CD14-positive monocyte (primary cell): ENCODE measurements at regions of chr9 and their contacts with region 1.

Region 1: DNA sequence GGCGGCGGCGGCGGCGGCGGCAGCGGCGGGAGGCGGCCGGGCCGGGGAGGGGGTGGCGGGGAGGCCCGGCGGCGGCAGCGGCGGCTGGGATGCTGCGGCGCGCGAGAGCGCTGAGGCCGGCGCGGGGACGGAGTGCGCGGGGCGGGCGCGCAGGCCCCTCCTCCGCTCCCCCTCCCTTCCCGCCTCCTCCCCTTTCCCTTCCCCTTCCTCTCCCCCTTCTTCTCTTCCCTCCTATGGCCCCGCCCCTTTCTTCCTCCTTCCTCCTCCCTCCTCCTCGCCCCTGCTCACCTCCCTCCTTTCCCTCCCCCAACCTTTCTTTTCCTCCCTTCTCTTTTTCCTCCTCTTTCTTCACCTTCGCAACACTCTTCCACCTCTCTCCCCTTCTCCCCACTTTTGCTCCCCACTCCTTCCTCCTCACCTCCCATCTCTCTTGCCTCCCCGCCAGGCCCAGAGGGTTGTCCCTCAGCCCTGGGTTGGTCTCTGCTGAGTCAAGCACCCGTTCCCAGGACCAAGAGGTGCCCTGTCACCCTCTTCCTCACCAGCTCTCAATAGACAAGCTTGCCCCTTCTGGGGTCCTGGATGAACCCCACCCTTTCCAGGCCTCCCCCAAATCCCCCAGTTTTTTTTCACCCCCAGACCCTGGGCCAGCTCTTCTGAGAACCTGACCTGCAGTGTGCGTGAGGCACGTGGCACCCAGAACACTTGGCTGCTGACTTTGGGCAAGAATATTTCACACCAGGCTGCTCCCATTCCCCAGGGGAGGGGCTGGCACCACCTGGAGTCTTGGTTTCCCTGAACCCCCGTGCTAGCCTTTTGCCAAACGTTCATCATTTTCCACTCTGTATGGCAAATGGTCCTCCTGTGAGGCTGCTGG is at the start of gene SEMA4D:
- DNase-seq: peak; percentile 61 to 79 (median 74)
- H3K4me3 ChIP-seq: peak within 1 kb of the TSS; percentile 82 to 91 (median 82)
- H3K4me3 Mint-ChIP-seq: peak within 1 kb of the TSS; percentile 94 to 97
- H3K27ac ChIP-seq: peak within 1 kb of the TSS; percentile 79 to 82
- H3K27ac Mint-ChIP-seq: peak within 1 kb of the TSS; percentile 75 to 97 (median 90)
- H3K4me1 ChIP-seq: peaks cover 58% of the 10 kb centered on the region in 2 donors
- H3K4me1 Mint-ChIP-seq: peaks cover 67% of the 10 kb centered on the region
- H3K27me3 ChIP-seq: no peaks in the 10 kb centered on the region
- H3K27me3 Mint-ChIP-seq: peaks cover 0 to 4% (median 1%) of the 10 kb centered on the region in 3 donors
- CTCF ChIP-seq: no peak
- polyA plus RNA-seq, gene SEMA4D: 28.2 to 117 (median 28.6) TPM

Region 2: GRCh38 chr9:89462817-89463683 is 35.2 kb before region 1 on chr9:
- intact Hi-C with region 1: loop called in 1 of 2 experiments (anchors 2 kb)
- DNase-seq: no peak
- H3K4me3 ChIP-seq: peak overlapping the region in 1 of 3 experiments; percentile 14
- H3K4me3 Mint-ChIP-seq: peak overlapping the region in 1 of 2 donors; percentile 23
- H3K27ac ChIP-seq: peak overlapping the region in 1 of 2 donors; percentile 80
- H3K27ac Mint-ChIP-seq: peak overlapping the region; percentile 86 to 95 (median 91)
- H3K4me1 ChIP-seq: peaks cover 47 to 55% of the 10 kb centered on the region in 2 donors
- H3K4me1 Mint-ChIP-seq: peaks cover 67% of the 10 kb centered on the region
- H3K27me3 ChIP-seq: no peaks in the 10 kb centered on the region
- H3K27me3 Mint-ChIP-seq: no peaks in the 10 kb centered on the region
- CTCF ChIP-seq: no peak

Region 3: DNA sequence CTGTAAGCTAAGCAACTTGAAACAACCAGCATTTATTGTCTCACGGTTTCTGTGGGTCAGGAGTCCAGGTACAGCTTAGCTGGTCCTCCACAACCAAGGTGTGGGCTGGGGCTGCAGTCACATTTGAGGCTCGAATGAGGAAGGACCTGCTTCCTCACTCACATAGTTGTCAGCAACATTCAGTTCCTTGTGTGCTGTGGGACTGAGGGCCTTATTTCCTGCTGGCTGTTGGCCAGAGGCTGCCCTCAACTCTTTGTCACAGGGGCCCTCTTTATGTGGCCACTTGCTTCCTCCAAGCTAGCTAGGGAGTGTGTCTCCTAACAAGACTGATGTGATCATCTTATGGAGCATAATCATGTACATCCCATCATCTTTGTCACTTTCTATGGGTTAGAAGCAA is 28.9 kb after region 1 on chr9:
- intact Hi-C with region 1: no loop called
- DNase-seq: peak; percentile 89 to 94 (median 92)
- H3K4me3 ChIP-seq: peak overlapping the region in 1 of 3 experiments; percentile 39
- H3K4me3 Mint-ChIP-seq: peak overlapping the region in 1 of 2 donors; percentile 62
- H3K27ac ChIP-seq: peak overlapping the region; percentile 68 to 94
- H3K27ac Mint-ChIP-seq: peak overlapping the region; percentile 93 to 98 (median 95)
- H3K4me1 ChIP-seq: peaks cover 100% of the 10 kb centered on the region in 2 donors
- H3K4me1 Mint-ChIP-seq: peaks cover 100% of the 10 kb centered on the region
- H3K27me3 ChIP-seq: no peaks in the 10 kb centered on the region
- H3K27me3 Mint-ChIP-seq: peaks cover 0 to 1% (median 0%) of the 10 kb centered on the region in 3 donors
- CTCF ChIP-seq: no peak